ENCODE measurements at regions of chr7 and their contacts with region 1.

Region 1: DNA sequence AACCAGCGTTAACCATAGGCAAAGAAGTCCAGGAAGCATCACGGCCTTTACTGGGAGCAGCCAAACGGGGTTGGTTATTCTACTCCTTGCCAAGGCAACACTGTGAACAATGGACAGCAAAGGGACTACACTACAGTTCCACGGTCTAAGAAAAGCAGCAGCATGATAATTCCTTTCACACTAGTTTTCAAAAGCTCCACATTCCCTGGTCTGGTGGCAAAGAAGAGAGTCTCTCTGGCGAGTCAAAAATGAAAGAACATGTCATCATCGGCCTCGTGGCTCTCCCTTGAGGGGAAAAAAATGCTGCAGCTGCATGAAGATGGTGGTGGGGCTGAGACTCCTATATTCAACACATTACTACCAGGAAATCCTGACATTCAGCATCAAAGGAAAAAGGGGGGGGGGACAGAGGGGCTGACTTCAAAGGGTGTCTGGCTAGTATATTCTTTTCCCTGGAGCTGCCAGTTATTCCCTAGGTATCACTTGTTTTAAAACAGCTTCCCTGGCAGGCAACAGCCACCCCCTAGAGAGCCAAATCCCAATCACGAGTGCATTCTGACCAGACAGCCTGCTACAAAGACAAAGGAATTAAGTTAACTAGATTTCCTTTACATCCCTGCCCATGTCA is 49.1 kb downstream of the SLC37A3 start:
- DNase-seq: no peak
- ATAC-seq: peak; percentile 68

Region 2: DNA sequence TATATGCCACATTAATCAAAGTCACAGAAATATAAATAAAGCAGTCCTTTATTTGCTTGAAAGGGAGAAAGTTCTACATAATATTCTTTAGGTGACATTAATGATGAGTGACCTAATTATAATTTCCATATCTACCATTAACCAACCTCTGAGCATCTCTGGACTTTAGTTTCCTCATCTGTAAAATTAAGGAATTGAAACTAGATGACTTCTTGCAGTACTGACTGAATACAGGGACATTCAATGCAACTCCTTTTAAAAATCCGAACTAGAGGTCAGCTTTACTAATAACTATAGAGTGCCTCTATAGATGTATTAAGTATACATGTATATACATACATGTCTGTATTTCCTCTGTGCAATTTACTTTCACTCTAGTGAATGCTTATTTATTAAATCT is 1004.2 kb before region 1 on chr7:
- intact Hi-C with region 1: loop called (anchors 5 kb)
- DNase-seq: no peak
- ATAC-seq: no peak